Dorsolateral prefrontal cortex (tissue), 120 donors: ENCODE measurements at regions of chrX and their contacts with region 1.

Region 1: DNA sequence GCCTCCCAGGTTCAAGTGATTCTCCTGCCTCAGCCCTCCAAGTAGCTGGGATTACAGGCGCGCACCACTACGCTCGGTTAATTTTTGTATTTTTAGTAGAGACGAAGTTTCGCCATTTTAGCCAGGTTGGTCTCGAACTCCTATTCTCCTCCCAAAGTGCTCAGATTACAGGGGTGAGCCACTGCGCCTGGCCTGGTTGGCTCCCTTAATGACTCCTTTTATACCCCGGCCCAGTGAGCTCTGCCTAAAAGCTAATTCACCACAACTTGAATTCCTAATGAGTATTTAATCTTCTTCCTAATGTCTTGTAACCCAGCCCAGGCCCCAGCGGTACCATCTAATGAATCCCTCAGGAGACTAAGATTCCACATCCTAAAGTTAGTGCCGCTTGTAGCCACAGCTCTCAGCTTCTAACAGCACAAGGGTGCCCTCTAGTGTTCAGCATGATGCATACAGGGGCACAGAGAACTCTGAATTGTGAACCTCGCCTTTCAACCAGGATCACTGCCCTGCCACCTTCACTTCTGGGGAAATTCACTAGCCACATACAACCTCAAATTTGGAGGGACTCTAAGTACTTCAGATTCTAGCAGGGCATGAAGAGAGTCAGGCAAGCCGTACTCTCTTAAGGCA is 89.5 kb downstream of the OR13H1 start:
- DNase-seq: peak in 9 of 10 donors; percentile 19 to 55 (median 45)
- H3K4me3 ChIP-seq: no peak overlapping the region
- H3K27ac ChIP-seq: no peak overlapping the region
- H3K27me3 ChIP-seq: peaks cover 0 to 93% (median 52%) of the 10 kb centered on the region in 45 donors
- CTCF ChIP-seq: peak; percentile 26 to 87 (median 75)

Region 2: GRCh38 chrX:130975947-130976346 is 657.5 kb before region 1 on chrX:
- intact Hi-C with region 1: loop called (anchors 2 to 5 kb)
- DNase-seq: peak in 1 of 10 donors; percentile 35
- H3K4me3 ChIP-seq: no peak overlapping the region
- H3K27ac ChIP-seq: no peak overlapping the region
- H3K27me3 ChIP-seq: peaks cover 0 to 82% (median 21%) of the 10 kb centered on the region in 45 donors
- CTCF ChIP-seq: peak; percentile 36 to 76 (median 62)

Region 3: GRCh38 chrX:131068945-131069719 is 564.3 kb before region 1 on chrX:
- intact Hi-C with region 1: loop called in 1 of 2 experiments (anchors 10 kb)
- DNase-seq: peak in 2 of 10 donors; percentile 26 to 35
- H3K4me3 ChIP-seq: peak overlapping the region in 15 of 59 donors; percentile 3 to 42 (median 24)
- H3K27ac ChIP-seq: no peak overlapping the region
- H3K27me3 ChIP-seq: peaks cover 0 to 98% (median 65%) of the 10 kb centered on the region in 45 donors
- CTCF ChIP-seq: peak in 49 of 56 donors; percentile 12 to 59 (median 41)

Region 4: DNA sequence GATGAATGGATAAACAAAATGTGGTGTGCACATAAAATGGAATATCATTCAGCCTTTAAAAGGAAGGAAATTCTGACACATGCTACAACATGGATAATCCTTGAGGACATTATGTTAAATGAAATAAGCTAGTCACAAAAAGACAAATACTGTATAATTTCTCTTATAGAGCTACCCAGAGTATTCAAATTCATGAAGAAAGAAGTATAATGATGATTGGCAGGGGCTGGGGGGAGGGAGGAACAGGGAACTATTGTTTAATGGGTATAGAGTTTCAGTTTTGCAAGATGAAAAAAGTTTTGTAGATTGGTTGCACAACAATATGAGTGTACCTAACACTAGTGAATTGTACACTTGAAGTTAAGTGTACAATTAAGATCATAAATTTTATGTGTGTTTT is 235.8 kb after region 1 on chrX:
- intact Hi-C with region 1: no loop called
- DNase-seq: no peak
- H3K4me3 ChIP-seq: no peak overlapping the region
- H3K27ac ChIP-seq: no peak overlapping the region
- H3K27me3 ChIP-seq: peaks cover 0 to 92% (median 39%) of the 10 kb centered on the region in 45 donors
- CTCF ChIP-seq: no peak